ENCODE measurements at regions of chr11 and their contacts with region 1.

Region 1: DNA sequence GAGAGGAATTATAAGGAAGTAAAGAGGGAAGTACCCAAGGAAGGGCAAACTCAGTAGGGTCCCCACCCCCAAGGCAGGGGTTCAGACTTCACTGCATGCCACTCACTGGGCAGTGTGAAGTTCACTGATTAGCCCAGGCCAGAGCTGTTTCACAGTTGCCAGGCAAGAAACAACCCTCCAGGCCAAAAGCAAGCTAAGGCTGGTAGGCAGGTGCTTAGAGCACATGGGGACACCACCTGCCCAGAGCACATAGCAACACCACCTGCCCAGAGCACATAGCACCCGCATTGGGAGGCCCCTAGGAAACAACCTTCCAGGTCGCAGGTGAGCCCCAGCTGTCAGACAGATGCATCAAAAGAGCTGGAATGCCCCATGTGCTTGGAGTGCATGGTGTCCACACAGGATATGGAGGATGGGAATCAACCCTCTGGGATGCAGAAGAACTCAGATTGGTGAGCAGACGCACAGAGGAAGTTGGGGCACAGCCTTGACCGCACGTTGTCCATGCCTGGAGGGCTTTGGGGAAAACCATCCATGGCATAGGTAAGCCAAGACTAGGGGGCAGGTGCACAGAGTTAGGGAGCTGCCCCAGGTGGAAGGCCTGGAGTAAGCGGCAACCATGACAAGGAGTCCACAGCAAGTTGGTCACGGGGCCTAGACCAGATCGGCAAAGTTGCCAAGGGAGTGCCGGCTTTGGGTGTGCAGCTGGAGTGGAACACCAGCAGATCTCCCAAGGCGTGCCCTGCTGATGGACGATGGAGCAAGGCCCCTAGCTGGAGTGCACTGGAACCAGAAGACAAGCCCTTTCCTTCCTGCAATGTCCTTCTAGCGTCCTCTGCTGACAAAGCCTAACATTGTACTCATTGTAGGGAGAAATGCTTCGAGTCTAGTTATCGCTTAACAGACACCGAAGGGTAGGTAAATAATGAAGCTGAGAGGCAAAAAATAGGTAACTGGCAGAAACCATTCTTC is 7.8 kb upstream of the TMEM216 start:
- DNase-seq: no peak
- H3K4me3 ChIP-seq: no peak overlapping the region
- CTCF ChIP-seq: peak; percentile 32

Region 2: DNA sequence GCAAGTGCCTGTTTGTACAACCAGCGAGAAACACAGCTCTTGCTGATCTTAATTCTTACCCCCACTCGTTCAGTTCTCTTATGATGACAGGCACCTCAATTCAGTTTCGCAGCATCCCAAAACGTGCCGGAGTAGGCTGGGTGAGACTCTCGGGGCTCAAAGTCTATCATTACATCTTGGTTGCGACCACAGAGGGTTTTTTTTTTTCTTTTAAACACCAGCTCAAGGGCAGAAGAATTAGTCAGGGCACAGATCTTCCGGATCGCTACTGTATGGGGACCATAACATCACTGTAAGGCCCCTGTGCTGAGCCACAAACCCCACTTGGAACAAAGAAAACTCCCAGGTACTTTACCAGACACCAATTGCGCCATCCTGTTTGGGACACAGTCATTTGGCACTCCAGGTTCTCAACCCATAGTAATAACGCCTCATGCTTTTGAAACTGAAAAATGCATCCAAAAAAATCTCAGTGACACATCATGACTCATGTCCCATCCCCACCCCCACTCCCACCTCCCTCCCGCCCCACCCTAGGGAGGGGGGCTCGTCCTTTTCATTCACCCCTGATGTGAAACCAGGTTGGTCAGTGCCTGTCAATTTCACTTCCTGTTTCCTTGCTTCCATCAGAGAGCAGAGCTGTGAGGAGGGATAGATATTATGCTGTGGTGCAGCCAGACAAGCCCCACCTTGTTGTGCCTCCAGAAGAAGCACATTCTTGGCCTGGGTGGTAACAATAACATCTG is 323.3 kb before region 1 on chr11:
- CTCF ChIA-PET with region 1: no interaction called
- POLR2A ChIA-PET with region 1: no interaction called
- DNase-seq: no peak
- H3K4me3 ChIP-seq: no peak overlapping the region
- CTCF ChIP-seq: no peak

Region 3: GRCh38 chr11:61254403-61255025 is 130.0 kb before region 1 on chr11:
- CTCF ChIA-PET with region 1: interaction called, 55 read pairs
- POLR2A ChIA-PET with region 1: interaction called, 4 read pairs
- DNase-seq: no peak
- H3K4me3 ChIP-seq: no peak overlapping the region
- CTCF ChIP-seq: peak; percentile 95

Region 4: GRCh38 chr11:61297746-61298145 is 86.8 kb before region 1 on chr11:
- CTCF ChIA-PET with region 1: interaction called, 11 read pairs
- POLR2A ChIA-PET with region 1: interaction called, 3 read pairs
- DNase-seq: peak; percentile 40
- H3K4me3 ChIP-seq: no peak overlapping the region
- CTCF ChIP-seq: no peak

Region 5: GRCh38 chr11:61332797-61333549 is 51.6 kb before region 1 on chr11 and contains the starts of genes DDB1 and TKFC:
- CTCF ChIA-PET with region 1: interaction called, 926 read pairs
- POLR2A ChIA-PET with region 1: interaction called, 6 read pairs
- DNase-seq: no peak
- H3K4me3 ChIP-seq: peak within 1 kb of the TSS; percentile 95
- CTCF ChIP-seq: no peak

Region 6: GRCh38 chr11:61347916-61348461 is 36.6 kb before region 1 on chr11:
- CTCF ChIA-PET with region 1: interaction called, 239 read pairs
- POLR2A ChIA-PET with region 1: no interaction called
- DNase-seq: no peak
- H3K4me3 ChIP-seq: no peak overlapping the region
- CTCF ChIP-seq: no peak

Region 7: DNA sequence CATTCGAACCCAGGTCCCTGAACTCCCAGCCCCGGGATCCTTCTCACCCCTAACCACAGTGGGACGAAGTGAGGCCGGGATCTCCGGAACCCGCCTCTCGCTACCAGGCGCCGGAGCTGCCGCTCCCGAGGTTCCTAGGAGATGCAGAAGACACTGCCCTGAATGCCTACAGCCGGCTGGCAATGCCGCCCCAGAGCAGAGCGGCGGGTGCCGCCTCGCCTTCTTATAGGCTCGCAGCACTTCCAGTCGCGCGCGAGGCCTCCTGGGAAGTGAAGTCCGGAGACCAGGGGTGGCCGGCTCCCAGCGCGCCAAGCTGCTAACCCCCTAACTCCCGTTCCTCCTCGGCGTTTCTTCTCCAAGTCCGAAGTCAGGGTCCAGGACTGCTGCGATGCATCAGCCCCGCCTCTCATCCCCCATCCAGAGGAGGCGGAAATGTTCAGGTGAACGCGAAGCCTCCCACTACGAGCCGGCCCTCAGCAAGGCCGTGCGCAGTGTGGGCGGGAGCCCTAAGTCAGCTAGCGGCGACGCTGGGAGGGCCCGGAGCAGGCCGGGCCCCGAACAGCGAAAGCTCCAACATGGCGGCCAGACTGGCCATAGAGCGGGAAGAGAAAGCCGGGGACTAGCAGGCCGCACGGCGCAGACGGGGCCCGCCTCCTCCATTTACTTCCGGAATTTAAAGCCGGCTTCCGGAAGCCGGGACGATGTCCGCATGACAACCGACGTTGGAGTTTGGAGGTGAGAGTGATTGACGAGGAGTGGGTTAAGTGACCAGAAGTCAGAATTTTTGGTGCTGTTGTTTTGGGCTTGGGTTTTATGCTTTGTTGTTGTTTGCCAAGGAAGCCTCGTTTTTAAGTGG is 22.6 kb before region 1 on chr11 and contains the starts of genes CYB561A3 and TMEM138:
- CTCF ChIA-PET with region 1: interaction called, 239 read pairs
- POLR2A ChIA-PET with region 1: interaction called, 9 read pairs
- DNase-seq: peak; percentile 68
- H3K4me3 ChIP-seq: peak within 1 kb of the TSS; percentile 69
- CTCF ChIP-seq: no peak

Region 8: GRCh38 chr11:61403658-61404057 is 19.1 kb after region 1 on chr11:
- CTCF ChIA-PET with region 1: interaction called, 20 read pairs
- POLR2A ChIA-PET with region 1: no interaction called
- DNase-seq: no peak
- H3K4me3 ChIP-seq: no peak overlapping the region
- CTCF ChIP-seq: no peak

Region 9: DNA sequence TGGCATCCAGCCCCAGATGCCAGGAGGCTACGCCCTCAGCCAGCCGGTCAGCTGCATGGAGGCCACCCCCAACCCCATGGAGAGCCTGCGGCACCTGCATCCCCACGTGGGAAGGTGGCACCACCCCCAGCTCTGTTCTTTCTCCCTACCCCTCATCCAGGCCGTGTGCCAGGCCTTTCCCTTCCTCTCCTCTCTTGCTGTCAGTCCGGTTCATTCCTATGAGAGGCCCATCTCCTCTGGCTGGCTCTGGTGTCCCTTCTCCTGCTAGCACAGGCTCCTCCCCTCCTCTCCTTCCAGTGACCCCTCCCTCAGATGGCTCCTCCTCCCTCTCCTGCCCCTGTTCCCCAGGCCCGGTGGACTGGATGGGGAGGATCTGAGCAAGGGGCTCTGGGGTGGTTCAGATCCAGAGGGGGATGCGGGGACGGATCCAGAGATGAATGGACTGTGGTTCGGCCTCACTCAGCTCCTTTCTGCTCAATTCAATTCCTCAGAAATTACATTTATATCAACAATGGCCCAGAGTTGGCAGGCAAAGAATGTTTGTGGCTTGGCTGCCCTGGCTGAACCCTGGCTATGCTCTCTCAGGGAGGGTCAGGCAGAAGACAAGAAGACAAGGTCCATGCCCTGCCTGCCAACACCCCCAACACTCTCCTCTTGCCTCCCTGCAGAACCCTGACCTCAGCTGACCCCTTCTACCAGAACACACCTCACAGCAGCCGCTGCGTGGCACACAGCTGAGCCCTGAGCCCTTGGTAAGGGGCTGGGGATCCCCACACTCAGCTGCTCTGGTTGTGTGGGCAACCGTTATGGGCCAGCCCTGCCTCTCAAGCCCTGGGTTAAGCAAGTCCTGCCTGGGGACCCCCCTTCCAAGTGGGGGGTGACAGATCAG is 105.5 kb after region 1 on chr11:
- CTCF ChIA-PET with region 1: no interaction called
- POLR2A ChIA-PET with region 1: no interaction called
- DNase-seq: no peak
- H3K4me3 ChIP-seq: no peak overlapping the region
- CTCF ChIP-seq: no peak

Measured in AG04449 (cell line).